ENCODE measurements at regions of chr12 and their contacts with region 1.

Region 1: GRCh38 chr12:1650260-1650977 is 21.4 kb downstream of the WNT5B start:
- DNase-seq: no peak
- ATAC-seq: no peak
- H3K4me3 ChIP-seq: no peak overlapping the region
- H3K4me3 Mint-ChIP-seq: no peak overlapping the region
- H3K27ac ChIP-seq: no peak overlapping the region
- H3K27ac Mint-ChIP-seq: no peak overlapping the region
- H3K4me1 ChIP-seq: peaks cover 0 to 9% of the 10 kb centered on the region in 2 experiments
- H3K4me1 Mint-ChIP-seq: peaks cover 0 to 8% (median 7%) of the 10 kb centered on the region in 3 donors
- H3K27me3 ChIP-seq: peaks cover 0 to 21% of the 10 kb centered on the region in 2 experiments
- H3K27me3 Mint-ChIP-seq: peaks cover 4 to 19% of the 10 kb centered on the region in 2 donors

Region 2: DNA sequence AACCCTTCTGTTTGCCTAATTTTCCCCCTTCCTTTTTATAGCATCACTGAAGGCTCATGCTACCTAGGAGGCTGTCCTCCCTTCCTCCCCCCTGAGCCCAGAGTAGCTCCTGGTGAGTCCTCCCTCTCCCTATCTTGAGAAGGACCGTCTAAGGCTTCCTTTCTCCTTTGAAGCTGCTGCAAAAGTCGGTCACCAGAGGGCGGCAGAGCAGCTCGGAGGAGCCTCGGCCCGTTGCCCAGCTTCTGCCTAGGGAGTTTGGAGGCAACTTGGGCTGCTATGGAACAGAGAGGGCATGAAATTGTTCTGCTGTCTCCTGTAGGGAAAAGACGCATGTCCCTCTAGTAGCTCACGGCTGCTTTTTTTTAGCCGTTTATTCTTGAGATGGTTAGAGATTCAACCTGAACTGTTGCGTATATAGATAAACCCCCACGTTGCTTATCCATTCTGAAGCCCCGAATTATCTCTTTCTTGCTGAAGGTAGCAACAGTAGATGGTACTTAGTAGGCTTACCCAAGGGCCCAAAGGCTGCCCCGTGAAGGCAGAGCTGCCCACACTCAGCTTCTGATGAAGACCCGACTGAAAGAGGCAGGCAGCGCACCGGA is 15.7 kb before region 1 on chr12:
- CTCF ChIA-PET with region 1: interaction called, 4 to 15 read pairs
- POLR2A ChIA-PET with region 1: no interaction called
- DNase-seq: peak; percentile 16 to 72 (median 48)
- ATAC-seq: peak; percentile 53 to 76 (median 56)
- H3K4me3 ChIP-seq: no peak overlapping the region
- H3K4me3 Mint-ChIP-seq: no peak overlapping the region
- H3K27ac ChIP-seq: no peak overlapping the region
- H3K27ac Mint-ChIP-seq: peak overlapping the region in 1 of 2 donors; percentile 69
- H3K4me1 ChIP-seq: peaks cover 2 to 15% of the 10 kb centered on the region in 2 experiments
- H3K4me1 Mint-ChIP-seq: peaks cover 7 to 17% (median 9%) of the 10 kb centered on the region in 3 donors
- H3K27me3 ChIP-seq: peaks cover 3 to 51% of the 10 kb centered on the region in 2 experiments
- H3K27me3 Mint-ChIP-seq: peaks cover 41 to 42% of the 10 kb centered on the region in 2 donors

Region 3: GRCh38 chr12:1690578-1691122 is 40.2 kb after region 1 on chr12 and contains the start of gene ADIPOR2:
- CTCF ChIA-PET with region 1: interaction called, 5 to 10 read pairs
- POLR2A ChIA-PET with region 1: interaction called in 1 of 2 experiments, 3 read pairs
- DNase-seq: peak; percentile 85 to 98 (median 93)
- ATAC-seq: peak; percentile 98
- H3K4me3 ChIP-seq: peak within 1 kb of the TSS; percentile 94 to 96
- H3K4me3 Mint-ChIP-seq: peak within 1 kb of the TSS; percentile 92 to 94 (median 92)
- H3K27ac ChIP-seq: peak within 1 kb of the TSS; percentile 91
- H3K27ac Mint-ChIP-seq: peak within 1 kb of the TSS; percentile 96 to 99
- H3K4me1 ChIP-seq: peaks cover 10 to 19% of the 10 kb centered on the region in 2 experiments
- H3K4me1 Mint-ChIP-seq: peaks cover 36 to 45% (median 42%) of the 10 kb centered on the region in 3 donors
- H3K27me3 ChIP-seq: no peaks in the 10 kb centered on the region
- H3K27me3 Mint-ChIP-seq: no peaks in the 10 kb centered on the region
- total RNA-seq, gene ADIPOR2: 21.7 to 35.0 (median 33.4) TPM

Region 4: GRCh38 chr12:1939801-1940607 is 289.6 kb after region 1 on chr12:
- CTCF ChIA-PET with region 1: interaction called, 14 to 43 read pairs
- POLR2A ChIA-PET with region 1: no interaction called
- DNase-seq: peak; percentile 70 to 93 (median 88)
- ATAC-seq: peak; percentile 86 to 100 (median 97)
- H3K4me3 ChIP-seq: no peak overlapping the region
- H3K4me3 Mint-ChIP-seq: no peak overlapping the region
- H3K27ac ChIP-seq: no peak overlapping the region
- H3K27ac Mint-ChIP-seq: peak overlapping the region in 1 of 2 donors; percentile 29
- H3K4me1 ChIP-seq: peaks cover 0 to 4% of the 10 kb centered on the region in 2 experiments
- H3K4me1 Mint-ChIP-seq: peaks cover 4 to 5% (median 5%) of the 10 kb centered on the region in 3 donors
- H3K27me3 ChIP-seq: no peaks in the 10 kb centered on the region
- H3K27me3 Mint-ChIP-seq: no peaks in the 10 kb centered on the region

Measured in T-cell (primary cell).